ENCODE measurements at regions of chr1 and their contacts with region 1.

Region 1: GRCh38 chr1:221435504-221435904 is 306.4 kb downstream of the DUSP10 start:
- DNase-seq: peak in 1 of 2 experiments; percentile 45
- H3K4me3 ChIP-seq: no peak overlapping the region
- H3K27ac ChIP-seq: no peak overlapping the region
- H3K4me1 ChIP-seq: peaks cover 20% of the 10 kb centered on the region
- H3K27me3 ChIP-seq: no peaks in the 10 kb centered on the region
- CTCF ChIP-seq: peak; percentile 98

Region 2: DNA sequence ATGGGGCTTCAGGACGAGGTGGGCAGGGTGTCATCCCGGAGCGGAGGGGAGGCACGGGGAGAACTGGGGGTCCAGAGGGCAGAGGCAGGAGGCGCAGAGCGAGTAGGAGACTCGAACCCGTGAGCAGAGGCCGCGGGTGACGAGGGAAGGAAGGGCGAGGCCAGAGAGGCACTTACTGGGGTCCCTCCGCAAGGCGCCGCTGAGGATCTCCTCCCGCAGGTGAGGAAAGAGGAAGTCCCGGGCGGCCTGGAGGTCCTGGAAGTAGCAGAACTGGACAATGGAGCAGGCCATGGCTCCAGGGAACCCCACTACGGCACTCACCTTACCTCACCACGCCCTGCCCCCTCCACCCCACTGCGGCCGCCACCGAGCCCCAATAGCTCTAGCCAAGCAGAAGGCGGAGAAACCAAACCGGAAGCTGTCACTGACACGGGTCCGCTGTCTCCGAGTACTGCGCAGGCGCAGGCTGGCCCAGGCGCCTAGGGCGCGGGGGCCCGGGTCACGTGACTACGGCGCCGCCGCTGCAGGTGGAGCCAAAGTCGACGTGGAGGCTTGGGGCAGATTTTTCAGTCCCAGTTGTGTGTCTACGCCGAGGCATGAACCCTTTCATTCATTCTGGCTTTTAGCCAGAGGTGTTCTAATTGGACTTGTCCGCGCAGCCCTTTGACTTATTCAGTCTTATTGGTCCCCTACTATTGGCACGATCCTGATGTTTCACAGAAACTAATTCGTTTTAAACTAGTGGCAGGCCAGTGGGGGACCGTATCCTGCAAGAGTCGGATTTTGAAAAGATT is 1163.3 kb before region 1 on chr1 and contains the start of gene RAB3GAP2:
- CTCF ChIA-PET with region 1: no interaction called
- POLR2A ChIA-PET with region 1: no interaction called
- intact Hi-C with region 1: loop called (anchors 5 kb)
- DNase-seq: peak; percentile 81 to 98
- H3K4me3 ChIP-seq: peak within 1 kb of the TSS; percentile 59
- H3K27ac ChIP-seq: peak within 1 kb of the TSS; percentile 61
- H3K4me1 ChIP-seq: peaks cover 15% of the 10 kb centered on the region
- H3K27me3 ChIP-seq: no peaks in the 10 kb centered on the region
- CTCF ChIP-seq: no peak
- total RNA-seq, gene RAB3GAP2: 48.8 and 51.0 TPM in 2 replicates

Region 3: DNA sequence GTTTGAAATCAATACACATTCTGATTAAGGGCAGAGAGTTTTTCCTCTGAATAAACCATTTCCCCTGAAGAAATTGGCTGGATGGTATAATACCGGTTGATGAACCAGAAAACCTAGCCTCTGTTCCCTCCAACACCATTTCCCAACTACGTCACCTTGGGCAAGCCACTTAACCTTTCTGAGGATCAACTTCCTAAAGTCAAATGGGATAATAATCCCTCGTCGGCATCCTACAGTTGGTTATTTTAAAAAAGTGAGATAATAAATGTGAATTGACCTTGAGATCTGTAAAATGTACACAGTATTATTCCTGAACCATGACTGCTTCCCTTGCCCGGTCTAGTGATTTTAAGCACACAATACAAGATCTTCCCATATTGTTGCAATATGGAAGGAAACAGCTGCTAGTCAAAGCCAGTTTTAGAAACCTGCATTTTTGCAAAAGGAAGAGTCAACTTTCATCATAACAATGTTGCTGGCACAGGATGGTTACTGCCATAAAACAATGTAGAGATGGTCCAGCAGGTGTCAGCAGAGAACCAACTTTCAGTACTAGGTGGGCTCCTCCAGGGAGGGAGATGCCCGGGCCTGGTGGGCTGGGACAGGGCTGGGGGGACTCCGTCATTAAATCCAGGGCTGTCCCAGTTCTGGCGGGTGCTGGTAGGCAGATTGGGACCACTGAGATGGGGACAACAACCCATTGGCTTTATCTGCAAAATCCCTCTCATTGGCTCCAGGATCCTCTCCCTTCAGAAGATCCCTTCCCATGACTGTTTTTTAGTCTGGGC is 561.4 kb before region 1 on chr1:
- CTCF ChIA-PET with region 1: interaction called, 5 read pairs
- POLR2A ChIA-PET with region 1: no interaction called
- intact Hi-C with region 1: loop called (anchors 1 kb)
- DNase-seq: peak in 1 of 2 experiments; percentile 35
- H3K4me3 ChIP-seq: no peak overlapping the region
- H3K27ac ChIP-seq: no peak overlapping the region
- H3K4me1 ChIP-seq: no peaks in the 10 kb centered on the region
- H3K27me3 ChIP-seq: no peaks in the 10 kb centered on the region
- CTCF ChIP-seq: peak; percentile 82

Region 4: GRCh38 chr1:221203224-221204054 is 232.1 kb before region 1 on chr1:
- CTCF ChIA-PET with region 1: interaction called, 7 read pairs
- POLR2A ChIA-PET with region 1: no interaction called
- intact Hi-C with region 1: loop called (anchors 1 kb)
- DNase-seq: peak; percentile 43 to 75
- H3K4me3 ChIP-seq: no peak overlapping the region
- H3K27ac ChIP-seq: no peak overlapping the region
- H3K4me1 ChIP-seq: no peaks in the 10 kb centered on the region
- H3K27me3 ChIP-seq: no peaks in the 10 kb centered on the region
- CTCF ChIP-seq: peak; percentile 90

Region 5: GRCh38 chr1:221335161-221336101 is 100.1 kb before region 1 on chr1:
- CTCF ChIA-PET with region 1: no interaction called
- POLR2A ChIA-PET with region 1: no interaction called
- intact Hi-C with region 1: loop called (anchors 1 kb)
- DNase-seq: peak; percentile 82 to 90
- H3K4me3 ChIP-seq: no peak overlapping the region
- H3K27ac ChIP-seq: peak overlapping the region; percentile 67
- H3K4me1 ChIP-seq: peaks cover 29% of the 10 kb centered on the region
- H3K27me3 ChIP-seq: no peaks in the 10 kb centered on the region
- CTCF ChIP-seq: no peak

Region 6: DNA sequence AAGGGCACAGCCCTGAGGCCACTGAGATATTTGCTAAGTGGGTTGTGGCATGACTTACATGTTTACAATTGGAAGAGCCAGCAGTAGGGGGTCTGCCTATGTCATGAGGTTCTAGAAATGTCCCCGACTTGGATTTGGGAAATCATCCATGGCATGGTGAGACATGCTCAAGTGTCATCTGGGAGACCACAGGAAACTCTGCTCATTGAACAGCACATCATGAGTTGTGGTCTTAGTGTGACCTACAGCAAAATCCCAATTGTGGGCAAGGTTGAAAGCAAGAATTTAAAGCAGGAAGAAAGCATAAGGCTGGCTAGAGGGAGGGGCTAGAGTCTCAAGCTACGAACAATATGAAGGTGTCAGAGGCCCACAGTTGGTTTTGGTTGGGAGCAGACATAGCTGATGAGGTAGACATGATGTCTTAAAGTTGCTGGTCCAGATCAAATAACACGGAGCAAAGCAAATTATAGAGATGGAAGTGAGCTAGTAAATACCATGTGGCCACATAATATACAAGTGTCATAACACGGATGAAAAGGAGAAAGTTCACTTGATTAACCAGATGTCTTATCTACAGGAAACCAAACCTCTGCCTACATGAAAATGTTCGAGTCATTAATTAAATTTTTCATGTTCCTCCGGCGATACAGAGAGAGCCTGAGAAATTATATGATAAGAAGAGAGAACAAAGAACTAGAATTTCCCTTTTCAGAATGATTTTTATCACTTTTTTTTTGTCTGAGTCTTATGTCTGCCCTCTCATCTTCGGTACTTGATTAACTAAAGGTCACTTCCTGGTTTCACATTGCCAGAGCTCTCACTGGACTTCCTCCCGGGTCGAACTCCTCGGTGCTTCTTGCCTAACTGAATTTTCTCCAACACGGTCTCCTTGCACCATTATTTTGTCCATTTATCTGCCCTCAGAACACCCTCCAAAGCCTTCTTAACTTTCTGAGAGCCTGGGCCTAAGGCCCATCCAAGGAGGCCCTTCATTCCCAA is 373.8 kb after region 1 on chr1:
- CTCF ChIA-PET with region 1: no interaction called
- POLR2A ChIA-PET with region 1: no interaction called
- intact Hi-C with region 1: loop called (anchors 2 kb)
- DNase-seq: no peak
- H3K4me3 ChIP-seq: no peak overlapping the region
- H3K27ac ChIP-seq: peak overlapping the region; percentile 90
- H3K4me1 ChIP-seq: peaks cover 59% of the 10 kb centered on the region
- H3K27me3 ChIP-seq: no peaks in the 10 kb centered on the region
- CTCF ChIP-seq: no peak

Region 7: GRCh38 chr1:221829327-221830015 is 394.0 kb after region 1 on chr1:
- CTCF ChIA-PET with region 1: no interaction called
- POLR2A ChIA-PET with region 1: no interaction called
- intact Hi-C with region 1: no loop called
- DNase-seq: no peak
- H3K4me3 ChIP-seq: no peak overlapping the region
- H3K27ac ChIP-seq: no peak overlapping the region
- H3K4me1 ChIP-seq: peaks cover 36% of the 10 kb centered on the region
- H3K27me3 ChIP-seq: no peaks in the 10 kb centered on the region
- CTCF ChIP-seq: no peak

Region 8: DNA sequence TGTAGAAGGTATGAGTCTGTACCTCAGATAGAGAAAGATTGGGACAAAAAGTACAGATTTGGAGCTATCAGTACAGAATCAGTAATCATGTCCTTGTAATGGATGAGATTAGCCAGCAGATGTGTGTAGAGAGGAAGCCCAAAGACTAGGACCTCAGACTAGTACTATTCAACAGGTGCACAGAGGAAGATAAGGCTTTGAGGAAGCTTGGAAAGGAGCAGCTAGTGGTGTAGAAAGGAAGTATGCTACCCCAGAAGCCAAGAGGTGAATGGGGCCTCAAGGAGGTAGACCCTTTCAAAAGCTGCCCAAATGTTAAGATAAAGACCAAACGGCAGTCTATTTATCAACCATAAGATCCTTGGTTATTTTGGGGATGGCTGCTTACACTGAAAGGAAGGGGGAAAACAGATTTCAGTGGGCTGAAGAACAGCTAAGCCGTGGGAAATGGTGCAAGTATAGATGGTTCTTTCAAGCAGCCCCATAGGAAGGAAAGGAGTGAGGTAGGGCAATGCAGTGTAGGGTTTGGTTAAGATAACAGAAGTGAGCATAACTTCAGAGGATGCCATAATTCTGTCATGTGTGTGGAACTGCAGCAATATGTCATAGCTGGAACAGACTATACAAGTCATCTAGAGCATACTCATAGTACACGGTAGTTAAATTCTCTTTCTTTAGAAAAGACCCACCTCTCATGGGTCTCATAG is 890.7 kb after region 1 on chr1:
- CTCF ChIA-PET with region 1: no interaction called
- POLR2A ChIA-PET with region 1: interaction called, 10 read pairs
- intact Hi-C with region 1: no loop called
- DNase-seq: no peak
- H3K4me3 ChIP-seq: no peak overlapping the region
- H3K27ac ChIP-seq: no peak overlapping the region
- H3K4me1 ChIP-seq: no peaks in the 10 kb centered on the region
- H3K27me3 ChIP-seq: no peaks in the 10 kb centered on the region
- CTCF ChIP-seq: no peak

Measured in PC-9 (cell line).